HAP-1 (cell line): ENCODE measurements at regions of chr10 and their contacts with region 1.

Region 1: GRCh38 chr10:42875792-42876460 is 93.3 kb downstream of the BMS1 start:
- DNase-seq: no peak
- H3K4me3 ChIP-seq: no peak overlapping the region
- H3K4me1 ChIP-seq: no peaks in the 10 kb centered on the region
- H3K27me3 ChIP-seq: no peaks in the 10 kb centered on the region

Region 2: DNA sequence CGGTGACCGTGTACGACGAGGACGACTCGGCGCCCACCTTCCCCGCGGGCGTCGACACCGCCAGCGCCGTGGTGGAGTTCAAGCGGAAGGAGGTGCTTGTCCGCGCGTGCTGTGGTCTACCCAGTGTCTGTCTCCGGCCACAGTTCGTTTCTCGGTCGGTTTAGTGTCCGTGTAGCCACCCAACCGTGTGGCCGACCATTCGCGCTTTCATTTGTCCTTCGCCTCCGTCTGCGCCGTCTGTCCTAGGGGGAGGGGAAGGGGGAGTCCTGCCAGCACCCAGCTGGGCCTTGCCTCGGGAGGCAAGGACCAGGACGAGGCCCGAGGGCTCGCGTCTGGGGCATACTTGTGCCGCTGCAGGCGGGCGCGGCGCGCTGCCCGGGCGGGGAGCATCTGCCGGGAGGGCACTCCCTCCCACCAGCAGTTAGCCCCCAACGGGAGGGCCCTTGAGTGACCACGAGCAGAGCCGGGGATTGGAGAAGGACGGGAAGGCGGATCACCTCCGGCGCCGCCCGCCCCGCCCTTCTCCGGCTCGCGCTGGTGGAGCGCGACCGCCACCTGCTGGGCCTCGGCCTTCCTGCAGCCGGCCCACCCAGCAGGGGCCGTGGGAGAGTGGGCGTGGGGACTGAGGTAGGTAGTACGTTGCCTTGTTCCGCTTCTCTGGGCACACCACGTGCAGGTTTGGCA is 229.3 kb after region 1 on chr10:
- in situ Hi-C with region 1: loop called (anchors 10 kb)
- DNase-seq: peak; percentile 79 to 88
- H3K4me3 ChIP-seq: peak overlapping the region; percentile 39
- H3K4me1 ChIP-seq: peaks cover 5% of the 10 kb centered on the region
- H3K27me3 ChIP-seq: no peaks in the 10 kb centered on the region